Thyroid gland (tissue), 4 donors: ENCODE measurements at regions of chr2 and their contacts with region 1.

Region 1: GRCh38 chr2:61470965-61471904 is at the start of gene USP34:
- DNase-seq: peak; percentile 94 to 95
- H3K4me3 ChIP-seq: peak within 1 kb of the TSS; percentile 53 to 89 (median 84)
- H3K27ac ChIP-seq: peak within 1 kb of the TSS; percentile 82 to 99 (median 96)
- H3K4me1 ChIP-seq: peaks cover 11 to 15% of the 10 kb centered on the region in 2 donors
- H3K27me3 ChIP-seq: no peaks in the 10 kb centered on the region
- CTCF ChIP-seq: peak in 1 of 6 experiments; percentile 16
- POLR2A ChIP-seq: peak in 1 of 2 donors; percentile 87
- total RNA-seq, gene USP34: 171 to 271 (median 231) TPM

Region 2: GRCh38 chr2:61538200-61538919 is 67.1 kb after region 1 on chr2 and contains the start of gene XPO1:
- intact Hi-C with region 1: loop called (anchors 10 kb)
- DNase-seq: peak; percentile 100
- H3K4me3 ChIP-seq: peak within 1 kb of the TSS; percentile 53 to 79 (median 66)
- H3K27ac ChIP-seq: peak within 1 kb of the TSS; percentile 99 to 100 (median 99)
- H3K4me1 ChIP-seq: peaks cover 17 to 26% of the 10 kb centered on the region in 2 donors
- H3K27me3 ChIP-seq: no peaks in the 10 kb centered on the region
- CTCF ChIP-seq: no peak
- POLR2A ChIP-seq: peak; percentile 88 to 93
- total RNA-seq, gene XPO1: 104 to 128 (median 118) TPM